ENCODE measurements at regions of chr14 and their contacts with region 1.

Region 1: GRCh38 chr14:30283826-30284446 is 275.0 kb upstream of the G2E3 start:
- DNase-seq: peak; percentile 68
- H3K4me3 Mint-ChIP-seq: no peak overlapping the region
- H3K27ac Mint-ChIP-seq: no peak overlapping the region
- H3K4me1 Mint-ChIP-seq: no peaks in the 10 kb centered on the region
- H3K27me3 Mint-ChIP-seq: no peaks in the 10 kb centered on the region
- CTCF ChIP-seq: peak; percentile 61

Region 2: GRCh38 chr14:30015489-30015888 is 268.4 kb before region 1 on chr14:
- CTCF ChIA-PET with region 1: no interaction called
- intact Hi-C with region 1: loop called (anchors 10 kb)
- DNase-seq: no peak
- H3K4me3 Mint-ChIP-seq: no peak overlapping the region
- H3K27ac Mint-ChIP-seq: no peak overlapping the region
- H3K4me1 Mint-ChIP-seq: no peaks in the 10 kb centered on the region
- H3K27me3 Mint-ChIP-seq: no peaks in the 10 kb centered on the region
- CTCF ChIP-seq: no peak

Region 3: GRCh38 chr14:30420515-30420914 is 136.6 kb after region 1 on chr14:
- CTCF ChIA-PET with region 1: no interaction called
- intact Hi-C with region 1: no loop called
- DNase-seq: no peak
- H3K4me3 Mint-ChIP-seq: no peak overlapping the region
- H3K27ac Mint-ChIP-seq: no peak overlapping the region
- H3K4me1 Mint-ChIP-seq: peaks cover 8% of the 10 kb centered on the region
- H3K27me3 Mint-ChIP-seq: peaks cover 41% of the 10 kb centered on the region
- CTCF ChIP-seq: no peak

Measured in Calu3 (cell line).